Head of caudate nucleus (tissue), 42 donors: ENCODE measurements at regions of chr5 and their contacts with region 1.

Region 1: DNA sequence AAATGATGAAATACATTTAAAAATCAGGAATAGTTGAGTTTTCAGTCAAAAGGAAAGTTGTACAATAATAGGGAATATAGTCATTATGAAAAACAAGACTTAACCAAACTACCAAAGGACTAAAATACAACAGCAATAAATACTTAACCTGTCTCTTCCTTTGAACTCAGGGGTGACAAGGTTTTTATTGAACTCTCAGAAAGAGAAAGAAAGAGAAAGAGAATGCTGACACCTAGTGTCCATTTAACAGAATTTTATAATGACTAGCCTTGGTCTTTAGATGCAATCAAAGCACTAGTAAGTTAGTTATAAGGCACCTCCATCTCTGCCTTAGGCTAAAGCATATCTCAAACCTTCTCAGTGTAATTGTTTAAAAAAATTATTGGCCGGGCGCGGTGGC is 47.5 kb downstream of the UIMC1 start:
- DNase-seq: no peak

Region 2: GRCh38 chr5:176658007-176658599 is 300.9 kb before region 1 on chr5:
- intact Hi-C with region 1: loop called (anchors 10 kb)
- DNase-seq: peak; percentile 63 to 93 (median 80)

Region 3: GRCh38 chr5:177142098-177142611 is 183.1 kb after region 1 on chr5:
- intact Hi-C with region 1: no loop called
- DNase-seq: no peak